HCT116 (cell line): ENCODE measurements at regions of chr1 and their contacts with region 1.

Region 1: GRCh38 chr1:153572569-153573015 is 6.9 kb upstream of the S100A2 start:
- DNase-seq: peak; percentile 84
- ATAC-seq: peak; percentile 82
- H3K4me3 ChIP-seq: peak overlapping the region in 1 of 2 experiments; percentile 20; a peak in 1 of 4 replicates
- H3K27ac ChIP-seq: peak overlapping the region; percentile 57
- H3K4me1 ChIP-seq: peaks cover 32 to 53% of the 10 kb centered on the region in 2 experiments
- H3K27me3 ChIP-seq: no peaks in the 10 kb centered on the region
- CTCF ChIP-seq: peak in 2 of 3 experiments; percentile 91 to 97; a peak in 4 of 6 replicates
- POLR2A ChIP-seq: no peak
- RAD21 ChIP-seq: no peak

Region 2: DNA sequence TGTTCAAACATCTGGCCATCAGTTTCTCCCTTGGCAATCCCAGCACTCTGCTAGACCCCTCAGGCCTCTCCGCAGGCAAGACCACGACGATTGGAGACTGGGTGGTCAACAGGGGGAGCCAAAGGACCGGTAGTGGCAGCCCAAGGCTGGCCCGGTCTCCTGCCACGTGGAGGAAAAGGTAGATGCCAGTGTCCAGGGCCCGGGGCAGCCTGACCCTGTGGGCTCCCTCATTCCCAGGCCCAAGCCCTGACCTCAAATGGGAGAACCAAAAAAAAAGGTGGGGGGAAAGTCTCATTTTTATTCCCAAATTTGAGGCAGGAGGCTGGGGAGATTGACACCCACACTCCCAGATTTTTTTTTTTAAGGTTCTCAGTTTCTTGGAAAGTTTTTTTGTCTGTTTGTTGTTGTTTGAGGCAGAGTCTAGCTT is 61.6 kb before region 1 on chr1:
- CTCF ChIA-PET with region 1: interaction called, 30 read pairs
- POLR2A ChIA-PET with region 1: interaction called, 8 read pairs
- RAD21 ChIA-PET with region 1: interaction called, 6 to 9 read pairs
- intact Hi-C with region 1: loop called (anchors 1 kb)
- DNase-seq: peak; percentile 70
- ATAC-seq: peak; percentile 78
- H3K4me3 ChIP-seq: no peak overlapping the region
- H3K27ac ChIP-seq: peak overlapping the region; percentile 39
- H3K4me1 ChIP-seq: peaks cover 34 to 91% of the 10 kb centered on the region in 2 experiments
- H3K27me3 ChIP-seq: no peaks in the 10 kb centered on the region
- CTCF ChIP-seq: peak; percentile 90 to 95 (median 92)
- POLR2A ChIP-seq: no peak
- RAD21 ChIP-seq: peak; percentile 100

Region 3: DNA sequence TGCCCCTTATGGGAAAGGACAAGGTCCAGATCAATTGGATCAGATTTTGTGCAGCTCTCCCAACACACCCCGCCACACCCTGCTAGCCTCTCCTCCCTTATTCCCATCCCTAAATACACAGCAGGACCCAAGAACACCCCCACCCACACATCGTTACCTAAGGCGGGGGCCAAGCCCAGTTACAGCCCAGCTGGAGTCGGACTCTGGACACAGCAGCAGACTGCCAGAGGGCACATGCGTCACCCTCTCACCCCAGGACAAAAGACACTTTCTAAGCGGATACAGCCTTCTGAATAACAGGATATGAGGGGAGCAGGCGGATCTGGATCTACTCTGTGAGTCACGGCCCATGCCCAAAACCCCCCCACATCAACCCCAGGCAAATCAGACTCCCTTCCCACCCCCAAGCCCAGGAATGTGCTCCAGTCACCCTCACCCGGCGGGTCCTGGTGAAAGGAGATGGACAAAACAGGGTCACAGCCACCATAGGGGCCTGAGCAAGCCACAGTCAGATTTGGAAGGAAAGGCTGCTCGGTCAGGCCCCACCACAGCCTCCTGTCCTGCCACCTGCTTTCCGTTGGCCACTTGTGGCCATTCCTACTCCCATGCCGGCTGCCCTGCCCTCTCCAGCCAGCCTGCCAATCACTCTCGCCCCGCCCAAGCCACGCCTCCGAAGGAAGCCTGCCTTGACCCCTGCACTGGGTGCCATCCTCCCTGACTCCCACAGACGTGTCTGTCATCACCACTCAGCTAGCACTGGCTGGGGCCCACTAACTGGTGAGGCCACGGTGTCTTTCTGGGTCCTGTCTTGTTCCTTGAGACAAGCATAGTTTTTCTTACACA is 36.4 kb after region 1 on chr1:
- CTCF ChIA-PET with region 1: interaction called, 33 read pairs
- POLR2A ChIA-PET with region 1: interaction called, 14 read pairs
- RAD21 ChIA-PET with region 1: interaction called in 1 of 2 experiments, 3 read pairs
- intact Hi-C with region 1: no loop called
- DNase-seq: peak; percentile 90
- ATAC-seq: peak; percentile 70
- H3K4me3 ChIP-seq: peak overlapping the region; percentile 51 to 59
- H3K27ac ChIP-seq: peak overlapping the region; percentile 72
- H3K4me1 ChIP-seq: peaks cover 41 to 64% of the 10 kb centered on the region in 2 experiments
- H3K27me3 ChIP-seq: no peaks in the 10 kb centered on the region
- CTCF ChIP-seq: no peak
- POLR2A ChIP-seq: peak; percentile 34
- RAD21 ChIP-seq: no peak

Region 4: GRCh38 chr1:153626922-153627796 is 54.6 kb after region 1 on chr1 and contains the start of gene S100A13:
- CTCF ChIA-PET with region 1: interaction called, 28 read pairs
- POLR2A ChIA-PET with region 1: interaction called, 12 read pairs
- RAD21 ChIA-PET with region 1: interaction called, 3 to 6 read pairs
- intact Hi-C with region 1: loop called (anchors 1 kb)
- DNase-seq: peak; percentile 93
- ATAC-seq: peak; percentile 87
- H3K4me3 ChIP-seq: peak within 1 kb of the TSS; percentile 65 to 72
- H3K27ac ChIP-seq: peak within 1 kb of the TSS; percentile 89
- H3K4me1 ChIP-seq: peaks cover 18 to 34% of the 10 kb centered on the region in 2 experiments
- H3K27me3 ChIP-seq: no peaks in the 10 kb centered on the region
- CTCF ChIP-seq: peak in 2 of 3 experiments; percentile 87 to 89; a peak in 4 of 6 replicates
- POLR2A ChIP-seq: peak; percentile 94
- RAD21 ChIP-seq: no peak
- total RNA-seq, gene S100A13: 143 TPM

Region 5: GRCh38 chr1:153670859-153671627 is 98.5 kb after region 1 on chr1 and contains the start of gene ILF2:
- CTCF ChIA-PET with region 1: interaction called, 6 read pairs
- POLR2A ChIA-PET with region 1: interaction called, 9 read pairs
- RAD21 ChIA-PET with region 1: no interaction called
- intact Hi-C with region 1: loop called (anchors 1 kb)
- DNase-seq: peak; percentile 99
- ATAC-seq: peak; percentile 86
- H3K4me3 ChIP-seq: peak within 1 kb of the TSS; percentile 73 to 97
- H3K27ac ChIP-seq: peak within 1 kb of the TSS; percentile 80
- H3K4me1 ChIP-seq: peaks cover 10 to 24% of the 10 kb centered on the region in 2 experiments
- H3K27me3 ChIP-seq: no peaks in the 10 kb centered on the region
- CTCF ChIP-seq: no peak; a peak in 1 of 6 replicates
- POLR2A ChIP-seq: peak; percentile 84
- RAD21 ChIP-seq: peak; percentile 21; the same call in 1 of the 2 replicates
- total RNA-seq, gene ILF2: 335 TPM